MCF 10A (cell line): ENCODE measurements at regions of chr6 and their contacts with region 1.

Region 1: GRCh38 chr6:73461537-73462350 is at the start of gene MTO1:
- DNase-seq: peak; percentile 94
- H3K4me3 Mint-ChIP-seq: peak within 1 kb of the TSS; percentile 88
- H3K27ac Mint-ChIP-seq: peak within 1 kb of the TSS; percentile 95
- H3K4me1 Mint-ChIP-seq: peaks cover 6% of the 10 kb centered on the region
- H3K27me3 Mint-ChIP-seq: no peaks in the 10 kb centered on the region
- CTCF ChIP-seq: no peak
- total RNA-seq, gene MTO1: 50.8 and 51.4 TPM in 2 replicates

Region 2: DNA sequence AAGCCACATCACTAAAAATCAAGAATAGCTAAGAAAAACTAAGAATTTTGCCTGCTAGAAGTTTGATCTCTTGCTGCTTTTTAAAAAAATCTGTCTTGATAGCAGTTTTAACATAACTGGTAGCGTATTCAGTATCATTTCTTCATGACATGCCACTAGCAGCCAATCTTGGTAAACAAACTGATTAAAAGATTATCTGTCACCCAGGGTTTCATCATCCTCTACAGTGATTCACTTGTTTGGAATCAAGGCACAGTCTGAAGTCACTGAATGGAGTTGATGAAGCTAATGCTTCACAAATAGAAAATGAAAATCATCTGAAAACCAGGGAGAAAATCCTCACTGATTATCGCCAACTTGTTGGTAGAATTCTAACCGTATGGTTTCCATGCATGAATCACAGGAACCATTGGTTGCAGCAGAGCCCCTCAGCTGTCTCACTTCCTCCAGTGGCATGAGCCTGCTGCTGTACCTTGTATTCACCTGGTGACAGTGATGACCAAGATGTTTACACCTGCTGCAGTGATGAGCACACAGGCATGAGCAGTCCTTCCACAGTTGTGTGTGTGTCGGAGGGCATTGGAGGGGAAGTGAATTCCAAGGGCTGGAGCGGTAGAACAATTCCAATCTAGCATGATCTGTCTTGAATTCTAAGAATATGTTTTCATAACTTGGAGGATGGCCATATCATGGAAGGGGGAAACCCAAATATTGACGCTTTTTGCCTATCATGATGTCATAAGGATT is 511.5 kb before region 1 on chr6:
- CTCF ChIA-PET with region 1: no interaction called
- POLR2A ChIA-PET with region 1: no interaction called
- intact Hi-C with region 1: no loop called
- DNase-seq: peak; percentile 62
- H3K4me3 Mint-ChIP-seq: no peak overlapping the region
- H3K27ac Mint-ChIP-seq: peak overlapping the region; percentile 65
- H3K4me1 Mint-ChIP-seq: peaks cover 36% of the 10 kb centered on the region
- H3K27me3 Mint-ChIP-seq: no peaks in the 10 kb centered on the region
- CTCF ChIP-seq: no peak

Region 3: DNA sequence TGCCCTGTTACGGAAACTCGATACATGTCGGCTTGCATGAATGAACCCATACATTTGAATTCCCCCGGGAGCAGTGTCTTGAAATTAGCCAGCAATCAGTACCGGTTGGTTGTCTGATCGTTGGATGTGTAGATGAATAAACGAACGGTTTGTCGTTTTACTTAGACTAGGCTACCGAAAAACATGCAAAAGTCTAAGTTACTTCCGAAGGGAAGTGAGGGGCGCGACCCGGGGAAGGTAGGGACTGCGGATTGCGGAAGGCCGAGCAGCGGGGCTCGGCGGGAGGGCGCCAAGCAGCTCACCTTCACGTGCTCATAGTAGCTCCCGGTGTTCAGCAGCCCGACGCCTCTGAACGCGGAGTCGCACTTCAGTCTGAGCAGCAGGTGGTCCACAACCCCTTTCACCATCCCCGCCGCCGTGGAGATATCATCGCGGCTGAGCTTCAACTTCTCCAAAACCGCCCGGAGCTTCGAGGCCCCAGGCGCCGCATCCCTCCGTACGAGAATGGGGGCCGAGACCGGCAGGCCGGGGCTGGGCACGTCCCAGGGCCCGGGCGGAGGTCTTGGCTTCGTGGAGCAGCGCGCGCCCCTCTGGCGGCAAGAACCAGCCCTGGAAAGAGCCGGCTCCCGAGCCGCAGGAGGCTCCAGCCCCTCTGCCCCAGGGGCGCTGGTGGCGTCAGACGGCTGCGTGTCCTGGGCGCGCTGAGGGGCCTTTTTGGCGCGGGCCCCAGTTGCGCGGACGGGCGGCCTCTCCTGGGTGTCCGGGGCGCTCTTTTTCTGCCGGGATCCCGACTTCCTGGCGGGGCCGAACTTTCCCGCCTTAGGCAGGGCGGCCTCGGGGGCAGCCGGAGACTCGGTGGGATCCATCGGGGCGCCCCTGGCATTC is 10.3 kb before region 1 on chr6:
- CTCF ChIA-PET with region 1: interaction called, 8 read pairs
- POLR2A ChIA-PET with region 1: interaction called, 59 read pairs
- intact Hi-C with region 1: no loop called
- DNase-seq: peak; percentile 54
- H3K4me3 Mint-ChIP-seq: peak overlapping the region; percentile 89
- H3K27ac Mint-ChIP-seq: peak overlapping the region; percentile 76
- H3K4me1 Mint-ChIP-seq: peaks cover 25% of the 10 kb centered on the region
- H3K27me3 Mint-ChIP-seq: no peaks in the 10 kb centered on the region
- CTCF ChIP-seq: no peak

Region 4: DNA sequence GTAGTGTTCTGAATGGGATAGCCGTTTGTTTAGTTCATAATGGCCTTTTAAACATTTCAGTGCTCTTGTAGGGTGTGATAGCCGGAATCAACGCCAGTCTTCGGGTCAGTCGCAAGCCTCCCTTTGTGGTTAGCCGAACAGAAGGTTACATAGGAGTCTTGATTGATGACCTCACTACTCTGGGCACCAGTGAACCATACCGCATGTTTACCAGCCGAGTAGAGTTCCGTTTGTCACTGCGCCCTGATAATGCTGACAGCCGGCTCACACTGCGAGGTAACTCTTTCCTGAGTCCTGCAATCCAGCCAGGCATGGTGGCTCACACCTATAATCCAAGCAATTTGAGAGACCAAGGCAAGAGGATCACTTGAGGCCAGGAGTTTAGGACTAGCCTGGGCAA is 20.2 kb after region 1 on chr6:
- CTCF ChIA-PET with region 1: no interaction called
- POLR2A ChIA-PET with region 1: interaction called, 12 read pairs
- intact Hi-C with region 1: no loop called
- DNase-seq: no peak
- H3K4me3 Mint-ChIP-seq: no peak overlapping the region
- H3K27ac Mint-ChIP-seq: no peak overlapping the region
- H3K4me1 Mint-ChIP-seq: no peaks in the 10 kb centered on the region
- H3K27me3 Mint-ChIP-seq: no peaks in the 10 kb centered on the region
- CTCF ChIP-seq: no peak

Region 5: DNA sequence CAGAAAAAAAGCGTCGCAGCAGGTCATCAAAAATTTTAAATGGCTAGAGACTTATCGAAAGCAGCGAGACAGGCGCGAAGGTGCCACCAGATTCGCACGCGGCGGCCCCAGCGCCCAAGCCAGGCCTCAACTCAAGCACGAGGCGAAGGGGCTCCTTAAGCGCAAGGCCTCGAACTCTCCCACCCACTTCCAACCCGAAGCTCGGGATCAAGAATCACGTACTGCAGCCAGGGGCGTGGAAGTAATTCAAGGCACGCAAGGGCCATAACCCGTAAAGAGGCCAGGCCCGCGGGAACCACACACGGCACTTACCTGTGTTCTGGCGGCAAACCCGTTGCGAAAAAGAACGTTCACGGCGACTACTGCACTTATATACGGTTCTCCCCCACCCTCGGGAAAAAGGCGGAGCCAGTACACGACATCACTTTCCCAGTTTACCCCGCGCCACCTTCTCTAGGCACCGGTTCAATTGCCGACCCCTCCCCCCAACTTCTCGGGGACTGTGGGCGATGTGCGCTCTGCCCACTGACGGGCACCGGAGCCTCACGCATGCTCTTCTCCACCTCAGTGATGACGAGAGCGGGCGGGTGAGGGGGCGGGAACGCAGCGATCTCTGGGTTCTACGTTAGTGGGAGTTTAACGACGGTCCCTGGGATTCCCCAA is 59.1 kb after region 1 on chr6 and contains the start of gene EEF1A1:
- CTCF ChIA-PET with region 1: interaction called, 7 read pairs
- POLR2A ChIA-PET with region 1: interaction called, 53 read pairs
- intact Hi-C with region 1: no loop called
- DNase-seq: peak; percentile 100
- H3K4me3 Mint-ChIP-seq: peak within 1 kb of the TSS; percentile 88
- H3K27ac Mint-ChIP-seq: peak within 1 kb of the TSS; percentile 99
- H3K4me1 Mint-ChIP-seq: peaks cover 12% of the 10 kb centered on the region
- H3K27me3 Mint-ChIP-seq: no peaks in the 10 kb centered on the region
- CTCF ChIP-seq: no peak
- total RNA-seq, gene EEF1A1: 13,507 and 14,346 TPM in 2 replicates

Region 6: DNA sequence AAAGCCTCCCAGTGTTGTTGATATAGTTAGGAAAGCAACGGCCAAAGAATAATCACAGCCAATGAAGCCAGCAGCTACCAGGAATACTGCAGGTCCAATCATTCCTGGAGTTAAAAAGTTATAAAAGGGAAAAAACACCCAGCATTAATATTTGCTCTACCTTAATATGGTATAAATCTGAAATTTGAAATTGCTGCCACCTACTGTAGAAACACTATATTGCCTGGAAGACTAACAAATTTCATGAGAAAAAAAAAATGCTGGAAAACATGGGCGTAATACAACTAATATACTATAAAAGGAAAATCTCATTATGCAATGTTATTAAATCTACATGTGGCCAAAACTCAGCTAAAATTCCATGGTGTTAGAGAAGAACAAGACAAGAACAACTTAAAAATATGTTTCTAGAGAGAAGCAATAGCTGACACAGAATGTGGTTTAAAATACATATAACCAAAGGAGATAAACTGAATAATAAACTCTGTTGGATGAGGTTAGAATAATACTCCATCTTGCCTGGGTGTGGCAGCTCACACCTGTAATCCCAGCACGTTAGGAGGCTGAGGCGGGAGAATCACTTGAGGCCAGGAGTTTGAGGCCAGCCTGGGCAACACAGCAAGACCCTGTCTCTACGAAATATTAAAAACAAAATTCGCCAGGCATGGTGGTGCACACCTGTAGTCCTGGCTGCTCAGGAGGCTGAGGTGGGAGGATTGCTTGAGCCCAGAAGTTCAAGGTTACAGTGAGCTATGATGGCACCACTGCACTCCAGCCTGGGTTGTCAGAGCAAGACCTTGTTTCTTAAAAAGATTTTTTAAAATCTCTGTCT is 148.9 kb after region 1 on chr6:
- CTCF ChIA-PET with region 1: interaction called, 12 read pairs
- POLR2A ChIA-PET with region 1: interaction called, 8 read pairs
- intact Hi-C with region 1: loop called (anchors 1 kb)
- DNase-seq: peak; percentile 64
- H3K4me3 Mint-ChIP-seq: no peak overlapping the region
- H3K27ac Mint-ChIP-seq: peak overlapping the region; percentile 19
- H3K4me1 Mint-ChIP-seq: no peaks in the 10 kb centered on the region
- H3K27me3 Mint-ChIP-seq: no peaks in the 10 kb centered on the region
- CTCF ChIP-seq: peak; percentile 42

Region 7: GRCh38 chr6:73653571-73654424 is 192.1 kb after region 1 on chr6 and contains the start of gene SLC17A5:
- CTCF ChIA-PET with region 1: interaction called, 12 read pairs
- POLR2A ChIA-PET with region 1: interaction called, 32 read pairs
- intact Hi-C with region 1: loop called (anchors 2 kb)
- DNase-seq: peak; percentile 95
- H3K4me3 Mint-ChIP-seq: peak within 1 kb of the TSS; percentile 97
- H3K27ac Mint-ChIP-seq: peak within 1 kb of the TSS; percentile 91
- H3K4me1 Mint-ChIP-seq: peaks cover 32% of the 10 kb centered on the region
- H3K27me3 Mint-ChIP-seq: no peaks in the 10 kb centered on the region
- CTCF ChIP-seq: no peak
- total RNA-seq, gene SLC17A5: 6.1 and 7.2 TPM in 2 replicates